Breast epithelium (tissue), 4 donors: ENCODE measurements at regions of chr3 and their contacts with region 1.

Region 1: DNA sequence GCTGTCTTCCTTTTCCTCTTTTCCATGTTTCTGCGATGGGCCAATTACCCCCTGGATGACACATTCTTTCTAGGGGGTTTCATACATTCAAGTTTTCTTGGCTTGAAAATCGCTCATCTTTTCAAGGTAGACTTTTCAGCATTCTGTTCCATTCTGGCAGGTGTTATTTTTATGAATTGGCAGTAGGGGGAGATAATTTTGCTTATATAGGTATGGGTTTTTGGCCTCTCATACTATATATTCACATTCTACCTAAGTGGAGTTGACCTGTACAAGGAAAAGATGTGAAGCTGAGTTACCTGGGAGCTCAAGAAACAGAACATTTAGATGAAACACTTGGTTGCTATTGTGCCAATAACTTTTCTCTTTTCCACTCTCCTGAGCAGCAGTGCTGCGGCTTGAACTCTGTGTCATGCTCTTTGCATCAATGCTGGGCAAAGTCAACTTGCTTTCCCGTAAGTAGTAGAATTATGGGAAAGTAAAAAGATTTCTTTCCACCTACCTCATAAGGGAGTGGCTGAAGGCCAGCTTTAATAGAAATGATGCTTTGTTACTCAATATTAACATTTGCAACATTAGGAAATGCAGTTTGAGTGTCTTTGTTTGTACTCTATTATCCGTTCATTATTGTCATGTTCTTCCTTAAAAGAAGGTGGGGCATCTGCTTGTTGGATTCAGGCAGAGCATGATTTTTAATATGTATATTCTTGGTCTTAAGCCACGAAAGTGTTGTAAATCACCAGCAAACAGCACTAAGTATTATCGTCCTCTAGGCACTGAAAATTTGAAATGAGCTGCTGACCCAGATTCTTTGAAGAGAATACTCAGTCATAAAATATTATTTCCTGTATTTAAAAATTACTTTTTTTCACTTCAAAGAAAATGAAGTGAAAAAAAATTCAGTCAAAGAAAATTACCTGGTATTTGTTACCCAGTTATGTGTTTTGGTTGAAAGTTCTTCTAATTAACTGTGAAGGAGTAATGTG is 27.7 kb upstream of the MFSD1 start:
- DNase-seq: peak in 1 of 2 donors; percentile 44
- H3K4me3 ChIP-seq: no peak overlapping the region
- H3K27ac ChIP-seq: peak overlapping the region; percentile 91 to 92
- H3K4me1 ChIP-seq: peaks cover 19 to 36% of the 10 kb centered on the region in 2 donors
- H3K27me3 ChIP-seq: no peaks in the 10 kb centered on the region
- CTCF ChIP-seq: no peak
- POLR2A ChIP-seq: no peak

Region 2: DNA sequence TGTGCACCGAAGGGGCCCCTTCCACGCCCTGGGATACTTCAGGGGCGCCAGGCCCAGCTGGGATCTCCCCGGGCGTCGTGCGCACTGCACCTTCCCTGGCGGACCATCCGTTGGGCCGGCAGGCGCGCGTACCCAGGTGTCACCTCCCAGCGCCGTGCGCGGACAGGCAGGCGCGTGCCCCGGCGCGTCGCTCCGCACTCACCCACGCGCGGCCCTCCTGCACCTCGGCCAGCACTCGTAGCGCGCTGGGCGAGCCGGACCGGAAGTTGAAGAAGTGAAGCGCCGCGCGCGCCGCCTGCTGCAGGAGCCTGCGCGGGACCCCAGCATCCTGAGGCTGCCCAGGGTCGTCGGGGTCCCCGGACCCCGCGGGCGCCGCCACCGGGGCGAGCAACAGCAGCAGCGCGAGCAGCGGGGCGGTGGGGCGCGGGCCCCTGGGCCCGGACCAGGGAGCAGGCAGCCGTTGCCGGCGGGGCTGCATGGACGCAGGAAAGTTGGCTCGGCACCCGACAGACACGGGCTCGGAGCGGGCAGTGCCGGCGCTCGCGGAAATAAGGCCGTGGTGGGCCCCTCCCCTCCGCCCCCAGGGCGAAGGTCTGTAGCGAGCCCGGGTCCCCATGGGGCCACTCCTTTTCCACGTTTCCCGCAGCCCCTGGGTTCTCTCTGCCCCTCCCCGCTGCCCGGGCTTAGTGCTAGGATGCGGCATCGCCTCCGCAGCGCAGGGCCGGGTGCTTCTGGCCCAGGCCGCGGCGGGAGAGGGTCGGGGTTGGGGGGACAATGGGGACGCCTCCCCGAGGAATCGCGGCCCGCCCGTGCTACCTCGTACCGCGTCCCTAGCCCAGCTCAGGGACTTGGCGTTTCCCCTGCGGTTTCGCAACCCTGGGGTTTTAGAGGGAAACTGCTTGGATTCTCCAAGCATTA is 41.9 kb before region 1 on chr3 and contains the start of gene RARRES1:
- intact Hi-C with region 1: loop called (anchors 5 kb)
- DNase-seq: peak; percentile 62 to 67
- H3K4me3 ChIP-seq: peak within 1 kb of the TSS; percentile 63 to 88 (median 77)
- H3K27ac ChIP-seq: peak within 1 kb of the TSS; percentile 92 to 97
- H3K4me1 ChIP-seq: peaks cover 3 to 6% of the 10 kb centered on the region in 2 donors
- H3K27me3 ChIP-seq: no peaks in the 10 kb centered on the region
- CTCF ChIP-seq: no peak
- POLR2A ChIP-seq: peak; percentile 27
- total RNA-seq, gene RARRES1: 3.5 to 568 (median 403) TPM

Region 3: GRCh38 chr3:158789592-158789991 is 15.5 kb after region 1 on chr3:
- intact Hi-C with region 1: loop called (anchors 2 kb)
- DNase-seq: no peak
- H3K4me3 ChIP-seq: no peak overlapping the region
- H3K27ac ChIP-seq: no peak overlapping the region
- H3K4me1 ChIP-seq: no peaks in the 10 kb centered on the region
- H3K27me3 ChIP-seq: no peaks in the 10 kb centered on the region
- CTCF ChIP-seq: peak in 2 of 3 donors; percentile 26 to 34
- POLR2A ChIP-seq: no peak